ENCODE measurements at regions of chr6 and their contacts with region 1.

Region 1: GRCh38 chr6:75526502-75527127 is 33.0 kb upstream of the FILIP1 start:
- DNase-seq: peak; percentile 28 to 71 (median 32)
- ATAC-seq: peak; percentile 94
- H3K4me3 ChIP-seq: no peak overlapping the region
- H3K27ac ChIP-seq: no peak overlapping the region
- H3K4me1 ChIP-seq: no peaks in the 10 kb centered on the region
- H3K27me3 ChIP-seq: no peaks in the 10 kb centered on the region
- CTCF ChIP-seq: peak; percentile 55 to 80 (median 64); a peak in 5 of 6 replicates
- EP300 ChIP-seq: no peak
- POLR2A ChIP-seq: no peak
- RAD21 ChIP-seq: peak; percentile 92

Region 2: DNA sequence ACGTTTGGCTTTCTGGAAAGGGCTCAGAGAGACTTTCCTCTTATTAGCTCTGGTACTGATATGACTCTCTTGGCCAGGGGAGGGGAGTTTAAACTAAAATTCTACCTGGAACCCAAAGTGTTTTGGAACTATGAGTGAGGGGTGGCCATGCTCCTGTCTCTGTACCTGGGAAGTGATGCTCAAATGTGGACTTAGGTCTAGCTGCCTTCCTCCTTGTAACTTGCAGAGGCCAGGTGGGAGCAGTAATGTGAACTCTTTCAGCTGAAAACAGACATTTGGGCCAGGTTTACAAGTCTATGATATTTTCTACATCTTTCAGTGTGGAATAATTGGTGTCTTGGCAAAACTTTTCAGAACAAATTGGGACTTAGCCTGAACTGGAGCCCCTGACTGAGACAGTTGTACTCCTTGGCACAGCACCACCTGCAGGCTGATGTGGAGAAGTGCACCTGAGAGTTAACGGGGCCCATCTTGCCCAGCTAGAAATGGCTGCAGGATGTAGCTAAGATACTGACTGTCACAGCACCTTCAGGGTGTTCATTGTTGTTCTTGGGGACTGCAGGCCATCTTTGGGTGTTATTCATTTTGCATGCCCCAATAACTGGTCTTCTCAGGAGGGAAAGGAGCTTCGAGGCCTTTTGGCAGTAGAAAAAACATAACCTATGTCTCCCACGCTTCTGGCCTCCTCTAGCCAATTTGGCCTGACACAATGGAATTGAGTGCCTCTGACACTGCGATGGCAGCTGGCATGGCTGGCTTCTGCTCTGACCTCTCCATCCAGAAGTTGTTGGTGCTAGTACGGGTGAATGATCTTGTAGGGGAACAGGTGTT is 1793.6 kb before region 1 on chr6:
- CTCF ChIA-PET with region 1: no interaction called
- POLR2A ChIA-PET with region 1: no interaction called
- in situ Hi-C with region 1: loop called (anchors 25 kb)
- intact Hi-C with region 1: no loop called
- DNase-seq: peak; percentile 64 to 77 (median 70)
- ATAC-seq: peak; percentile 98
- H3K4me3 ChIP-seq: no peak overlapping the region
- H3K27ac ChIP-seq: no peak overlapping the region
- H3K4me1 ChIP-seq: no peaks in the 10 kb centered on the region
- H3K27me3 ChIP-seq: no peaks in the 10 kb centered on the region
- CTCF ChIP-seq: peak; percentile 81 to 92 (median 86)
- EP300 ChIP-seq: no peak
- POLR2A ChIP-seq: no peak
- RAD21 ChIP-seq: peak; percentile 78 to 83

Region 3: DNA sequence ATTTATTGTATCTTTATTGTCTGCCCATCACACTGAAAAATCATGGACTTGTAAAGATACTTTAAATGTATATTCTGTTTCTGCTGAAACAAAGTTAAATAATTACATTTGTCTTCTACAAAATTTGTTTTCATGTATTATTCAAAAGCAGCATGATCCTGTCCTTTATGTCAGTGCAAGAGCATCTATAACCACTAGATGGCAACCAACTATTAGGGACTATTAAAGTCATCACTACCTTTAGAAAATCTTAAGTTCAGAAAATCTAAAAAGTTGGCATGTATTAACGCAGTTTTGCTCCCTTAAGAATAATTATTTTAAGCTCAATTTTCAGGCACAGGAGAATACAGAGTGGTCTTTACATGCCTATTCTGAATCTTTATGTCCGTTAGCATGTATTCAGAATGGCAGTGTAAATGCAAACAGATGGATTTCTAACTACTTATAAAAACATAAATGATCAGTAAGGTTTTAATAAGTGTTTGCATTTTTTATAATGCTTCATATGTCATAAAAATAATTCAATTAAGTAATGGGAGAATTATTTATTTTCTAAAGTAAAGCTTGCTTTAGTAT is 259.8 kb before region 1 on chr6:
- CTCF ChIA-PET with region 1: interaction called, 25 read pairs
- POLR2A ChIA-PET with region 1: no interaction called
- in situ Hi-C with region 1: loop called (anchors 10 kb)
- intact Hi-C with region 1: loop called (anchors 1 kb)
- DNase-seq: peak in 3 of 4 experiments; percentile 25 to 48 (median 40)
- ATAC-seq: peak; percentile 86
- H3K4me3 ChIP-seq: no peak overlapping the region
- H3K27ac ChIP-seq: no peak overlapping the region
- H3K4me1 ChIP-seq: no peaks in the 10 kb centered on the region
- H3K27me3 ChIP-seq: no peaks in the 10 kb centered on the region
- CTCF ChIP-seq: peak; percentile 48 to 76 (median 52); a peak in 5 of 6 replicates
- EP300 ChIP-seq: no peak
- POLR2A ChIP-seq: no peak
- RAD21 ChIP-seq: peak; percentile 77 to 78

Region 4: GRCh38 chr6:75296811-75297779 is 229.5 kb before region 1 on chr6:
- CTCF ChIA-PET with region 1: interaction called, 14 read pairs
- POLR2A ChIA-PET with region 1: no interaction called
- in situ Hi-C with region 1: no loop called
- intact Hi-C with region 1: loop called (anchors 1 kb)
- DNase-seq: peak; percentile 30 to 75 (median 36)
- ATAC-seq: peak; percentile 85
- H3K4me3 ChIP-seq: no peak overlapping the region
- H3K27ac ChIP-seq: no peak overlapping the region
- H3K4me1 ChIP-seq: no peaks in the 10 kb centered on the region
- H3K27me3 ChIP-seq: peaks cover 0 to 1% of the 10 kb centered on the region in 2 experiments; a peak in 2 of 5 replicates
- CTCF ChIP-seq: peak in 2 of 3 experiments; percentile 46 to 81; a peak in 4 of 6 replicates
- EP300 ChIP-seq: no peak
- POLR2A ChIP-seq: no peak
- RAD21 ChIP-seq: peak; percentile 76 to 88

Region 5: DNA sequence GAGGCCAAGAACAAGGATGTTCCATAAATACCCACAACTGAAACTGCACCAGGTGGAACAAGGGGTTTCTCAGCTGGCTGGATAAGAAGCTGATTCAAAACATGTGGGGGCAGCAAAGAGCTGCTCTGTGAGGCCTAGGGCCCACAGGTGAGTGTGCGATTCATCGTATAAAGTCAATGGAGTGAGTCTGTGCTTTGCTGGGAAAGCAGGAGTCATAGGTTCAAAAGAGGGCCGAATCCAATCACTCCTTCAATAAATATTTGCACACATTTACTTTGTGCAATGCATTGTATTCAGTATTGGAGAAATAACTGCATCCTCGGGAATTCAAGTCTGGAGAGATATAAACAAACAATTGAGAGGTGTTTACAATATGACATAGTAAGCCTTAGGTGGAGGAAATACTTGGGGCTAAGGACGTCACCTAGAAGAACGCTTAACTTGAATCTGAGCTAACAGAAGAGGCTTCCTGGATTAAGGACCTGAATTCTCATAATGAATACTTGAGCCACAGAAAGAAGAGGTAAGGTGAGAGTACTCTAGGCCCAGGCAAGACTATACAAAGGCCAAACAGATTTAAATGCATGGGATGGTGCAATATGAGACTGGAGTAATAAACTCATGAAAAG is 158.3 kb before region 1 on chr6:
- CTCF ChIA-PET with region 1: no interaction called
- POLR2A ChIA-PET with region 1: no interaction called
- in situ Hi-C with region 1: no loop called
- intact Hi-C with region 1: loop called (anchors 5 kb)
- DNase-seq: peak in 2 of 4 experiments; percentile 15 to 43
- ATAC-seq: peak; percentile 93
- H3K4me3 ChIP-seq: no peak overlapping the region
- H3K27ac ChIP-seq: no peak overlapping the region
- H3K4me1 ChIP-seq: no peaks in the 10 kb centered on the region
- H3K27me3 ChIP-seq: no peaks in the 10 kb centered on the region
- CTCF ChIP-seq: peak; percentile 46 to 52 (median 47)
- EP300 ChIP-seq: no peak
- POLR2A ChIP-seq: no peak
- RAD21 ChIP-seq: peak; percentile 30 to 64

Region 6: DNA sequence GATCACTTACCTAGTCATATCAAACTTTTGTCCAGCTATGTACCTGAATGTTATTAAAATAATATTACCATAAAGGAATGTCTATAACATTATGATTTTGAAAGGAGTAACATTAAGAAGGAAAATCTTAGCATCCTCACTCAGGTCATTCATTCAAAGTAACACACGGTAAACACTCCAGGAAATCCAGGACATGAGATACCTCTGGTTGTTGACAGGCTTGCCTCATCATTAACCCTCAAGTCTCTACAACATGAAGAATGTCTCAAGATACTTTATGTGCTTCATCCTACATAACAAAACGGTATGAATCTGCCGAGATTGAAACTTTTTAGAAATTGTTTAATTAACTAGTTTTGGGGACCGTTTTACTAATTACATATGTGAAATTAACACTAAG is 32.3 kb before region 1 on chr6:
- CTCF ChIA-PET with region 1: no interaction called
- POLR2A ChIA-PET with region 1: no interaction called
- in situ Hi-C with region 1: no loop called
- intact Hi-C with region 1: no loop called
- DNase-seq: no peak
- ATAC-seq: no peak
- H3K4me3 ChIP-seq: no peak overlapping the region
- H3K27ac ChIP-seq: no peak overlapping the region
- H3K4me1 ChIP-seq: peaks cover 0 to 7% of the 10 kb centered on the region in 2 experiments; a peak in 2 of 5 replicates
- H3K27me3 ChIP-seq: no peaks in the 10 kb centered on the region; a peak in 1 of 5 replicates
- CTCF ChIP-seq: no peak
- EP300 ChIP-seq: no peak
- POLR2A ChIP-seq: no peak
- RAD21 ChIP-seq: no peak